SK-N-SH (cell line): ENCODE measurements at regions of chr2 and their contacts with region 1.

Region 1: GRCh38 chr2:75180476-75180875 is 18.8 kb downstream of the TACR1 start:
- DNase-seq: no peak
- H3K4me3 ChIP-seq: no peak overlapping the region
- H3K27ac ChIP-seq: no peak overlapping the region
- H3K4me1 ChIP-seq: no peaks in the 10 kb centered on the region; a peak in 1 of 4 replicates
- H3K27me3 ChIP-seq: no peaks in the 10 kb centered on the region
- CTCF ChIP-seq: no peak
- EP300 ChIP-seq: no peak
- RAD21 ChIP-seq: no peak

Region 2: GRCh38 chr2:74886811-74887210 is 293.7 kb before region 1 on chr2:
- CTCF ChIA-PET with region 1: no interaction called
- POLR2A ChIA-PET with region 1: no interaction called
- DNase-seq: peak; percentile 50
- H3K4me3 ChIP-seq: no peak overlapping the region
- H3K27ac ChIP-seq: no peak overlapping the region; a peak in 1 of 4 replicates
- H3K4me1 ChIP-seq: peaks cover 5 to 13% of the 10 kb centered on the region in 2 experiments; a peak in 1 of 4 replicates
- H3K27me3 ChIP-seq: no peaks in the 10 kb centered on the region
- CTCF ChIP-seq: no peak; the same call in 1 of the 2 replicates
- EP300 ChIP-seq: no peak
- RAD21 ChIP-seq: peak; percentile 47

Region 3: GRCh38 chr2:74958274-74959105 is 222.0 kb before region 1 on chr2 and contains the start of gene POLE4:
- CTCF ChIA-PET with region 1: no interaction called
- POLR2A ChIA-PET with region 1: no interaction called
- DNase-seq: peak; percentile 93
- H3K4me3 ChIP-seq: peak within 1 kb of the TSS; percentile 62 to 68
- H3K27ac ChIP-seq: peak within 1 kb of the TSS; percentile 57 to 79; a peak in 2 of 4 replicates
- H3K4me1 ChIP-seq: peaks cover 0 to 8% of the 10 kb centered on the region in 2 experiments; a peak in 2 of 4 replicates
- H3K27me3 ChIP-seq: no peaks in the 10 kb centered on the region
- CTCF ChIP-seq: no peak
- EP300 ChIP-seq: peak in 1 of 2 experiments; percentile 20; a peak in 1 of 4 replicates
- RAD21 ChIP-seq: no peak
- polyA plus RNA-seq, gene POLE4: 34.2 and 42.1 TPM in 2 replicates

Region 4: DNA sequence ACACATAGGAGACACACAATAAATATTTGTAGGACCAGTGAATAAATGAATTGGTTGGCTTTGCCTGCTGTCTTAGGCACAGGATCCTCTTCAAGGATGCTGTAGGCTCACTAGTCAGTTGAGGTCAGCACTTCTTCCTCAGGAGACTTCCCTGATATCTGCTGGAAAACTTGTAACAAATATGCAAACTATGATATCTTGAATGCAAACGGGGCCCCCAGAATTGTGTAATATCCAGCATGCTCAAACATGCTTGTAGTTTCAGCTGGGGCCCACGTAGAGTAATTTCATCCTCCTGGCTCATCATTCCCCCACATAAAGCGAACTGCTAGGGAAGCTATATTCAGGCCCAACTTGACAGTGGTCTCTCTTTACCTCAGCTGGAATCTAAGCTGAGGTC is 178.5 kb before region 1 on chr2:
- CTCF ChIA-PET with region 1: no interaction called
- POLR2A ChIA-PET with region 1: no interaction called
- DNase-seq: no peak
- H3K4me3 ChIP-seq: no peak overlapping the region
- H3K27ac ChIP-seq: no peak overlapping the region
- H3K4me1 ChIP-seq: no peaks in the 10 kb centered on the region; a peak in 1 of 4 replicates
- H3K27me3 ChIP-seq: no peaks in the 10 kb centered on the region
- CTCF ChIP-seq: no peak
- EP300 ChIP-seq: no peak
- RAD21 ChIP-seq: no peak

Region 5: DNA sequence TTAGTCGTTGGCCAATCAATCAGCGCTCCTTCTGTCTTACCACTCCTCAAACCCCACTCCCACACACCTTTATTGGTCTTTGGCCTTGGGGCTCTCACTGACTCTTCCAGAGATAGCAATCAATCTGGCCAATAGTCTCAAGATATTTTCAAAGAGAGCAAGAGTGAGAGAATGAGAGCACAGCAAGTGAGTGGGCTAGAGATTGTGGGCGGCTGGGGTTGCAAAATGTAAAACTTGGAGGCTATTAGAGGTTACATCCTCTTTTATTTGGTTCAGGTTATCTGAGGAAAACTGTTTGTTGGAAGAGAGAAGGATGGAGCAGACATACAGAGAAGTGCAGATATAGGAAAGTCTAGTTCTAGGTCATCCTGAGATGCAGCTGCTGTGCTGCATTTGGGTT is 14.0 kb before region 1 on chr2:
- CTCF ChIA-PET with region 1: no interaction called
- POLR2A ChIA-PET with region 1: no interaction called
- DNase-seq: no peak
- H3K4me3 ChIP-seq: no peak overlapping the region
- H3K27ac ChIP-seq: no peak overlapping the region
- H3K4me1 ChIP-seq: no peaks in the 10 kb centered on the region; a peak in 1 of 4 replicates
- H3K27me3 ChIP-seq: no peaks in the 10 kb centered on the region; the same call in 1 of the 2 replicates
- CTCF ChIP-seq: no peak
- EP300 ChIP-seq: no peak
- RAD21 ChIP-seq: no peak

Region 6: GRCh38 chr2:75199428-75200011 is 19.0 kb after region 1 on chr2 and contains the start of gene TACR1:
- CTCF ChIA-PET with region 1: interaction called, 17 read pairs
- POLR2A ChIA-PET with region 1: no interaction called
- DNase-seq: peak; percentile 78
- H3K4me3 ChIP-seq: peak within 1 kb of the TSS; percentile 34 to 53
- H3K27ac ChIP-seq: no peak within 1 kb of the TSS
- H3K4me1 ChIP-seq: peaks cover 0 to 20% of the 10 kb centered on the region in 2 experiments; a peak in 1 of 4 replicates
- H3K27me3 ChIP-seq: peaks cover 60% of the 10 kb centered on the region
- CTCF ChIP-seq: peak; percentile 67
- EP300 ChIP-seq: no peak
- RAD21 ChIP-seq: peak; percentile 54
- polyA plus RNA-seq, gene TACR1: under 0.01 TPM in 1 of 2 replicates, not detected in the other